ENCODE measurements at regions of chr20 and their contacts with region 1.

Region 1: GRCh38 chr20:36331006-36331608 is 25.0 kb downstream of the DLGAP4 start:
- DNase-seq: no peak
- ATAC-seq: no peak
- H3K4me3 ChIP-seq: no peak overlapping the region
- H3K27ac ChIP-seq: no peak overlapping the region
- H3K4me1 ChIP-seq: peaks cover 7% of the 10 kb centered on the region
- H3K27me3 ChIP-seq: peaks cover 17% of the 10 kb centered on the region
- CTCF ChIP-seq: no peak

Region 2: GRCh38 chr20:36199345-36200257 is 131.5 kb before region 1 on chr20:
- CTCF ChIA-PET with region 1: no interaction called
- POLR2A ChIA-PET with region 1: no interaction called
- intact Hi-C with region 1: no loop called
- DNase-seq: peak; percentile 88
- ATAC-seq: peak; percentile 90
- H3K4me3 ChIP-seq: no peak overlapping the region
- H3K27ac ChIP-seq: no peak overlapping the region
- H3K4me1 ChIP-seq: no peaks in the 10 kb centered on the region
- H3K27me3 ChIP-seq: no peaks in the 10 kb centered on the region
- CTCF ChIP-seq: peak; percentile 90

Region 3: DNA sequence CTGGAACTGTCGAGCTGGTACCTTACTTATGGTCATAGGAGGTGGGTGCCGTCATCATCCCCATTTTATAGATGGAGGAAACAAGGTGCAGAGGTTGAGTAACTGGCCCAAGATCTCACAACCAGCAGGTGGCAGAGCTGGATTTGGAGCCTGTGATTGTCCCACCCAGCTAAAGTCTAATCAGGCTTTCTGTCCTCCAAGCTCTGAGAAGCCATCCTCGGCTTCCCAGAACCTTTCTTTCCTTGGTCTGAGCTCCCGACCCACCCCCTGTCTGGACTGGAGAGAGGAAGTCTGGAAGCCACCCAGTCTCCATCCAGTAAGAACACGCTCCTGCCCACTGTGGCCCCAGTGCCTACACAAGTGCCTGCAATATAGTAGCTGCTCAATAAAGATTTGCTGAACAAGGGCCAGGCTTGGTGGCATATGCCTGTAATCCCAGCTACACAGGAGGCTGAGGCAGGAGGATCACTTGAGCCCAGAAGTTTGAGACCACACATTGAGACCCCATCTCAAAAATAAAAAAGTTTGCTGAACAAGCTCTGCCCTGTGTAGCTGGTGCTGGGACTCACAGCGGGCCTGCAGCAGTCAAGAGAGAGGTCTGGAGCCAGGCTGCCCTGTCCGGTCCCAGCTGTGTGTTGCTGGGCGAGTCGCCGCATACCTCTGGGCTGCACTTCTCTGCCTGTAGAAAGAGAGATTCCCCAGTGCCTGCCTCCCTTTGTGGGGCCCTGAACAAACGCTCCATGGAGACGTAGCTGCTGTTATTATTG is 57.5 kb before region 1 on chr20:
- CTCF ChIA-PET with region 1: interaction called, 10 read pairs
- POLR2A ChIA-PET with region 1: no interaction called
- intact Hi-C with region 1: no loop called
- DNase-seq: peak; percentile 66
- ATAC-seq: peak; percentile 74
- H3K4me3 ChIP-seq: no peak overlapping the region
- H3K27ac ChIP-seq: no peak overlapping the region
- H3K4me1 ChIP-seq: no peaks in the 10 kb centered on the region
- H3K27me3 ChIP-seq: peaks cover 17% of the 10 kb centered on the region
- CTCF ChIP-seq: peak; percentile 72

Region 4: GRCh38 chr20:36384022-36384619 is 53.0 kb after region 1 on chr20:
- CTCF ChIA-PET with region 1: no interaction called
- POLR2A ChIA-PET with region 1: no interaction called
- intact Hi-C with region 1: no loop called
- DNase-seq: peak; percentile 55
- ATAC-seq: no peak
- H3K4me3 ChIP-seq: no peak overlapping the region
- H3K27ac ChIP-seq: no peak overlapping the region
- H3K4me1 ChIP-seq: no peaks in the 10 kb centered on the region
- H3K27me3 ChIP-seq: peaks cover 35% of the 10 kb centered on the region
- CTCF ChIP-seq: peak; percentile 42

Region 5: GRCh38 chr20:36538026-36538722 is 207.1 kb after region 1 on chr20:
- CTCF ChIA-PET with region 1: no interaction called
- POLR2A ChIA-PET with region 1: no interaction called
- intact Hi-C with region 1: no loop called
- DNase-seq: no peak
- ATAC-seq: no peak
- H3K4me3 ChIP-seq: no peak overlapping the region
- H3K27ac ChIP-seq: no peak overlapping the region
- H3K4me1 ChIP-seq: peaks cover 5% of the 10 kb centered on the region; the same call in 1 of the 2 replicates
- H3K27me3 ChIP-seq: no peaks in the 10 kb centered on the region
- CTCF ChIP-seq: no peak

Measured in PC-3 (cell line).